Activated CD8-positive, alpha-beta T cell treated with anti-CD3 and anti-CD28 coated beads, Interleukin-2, amount 10 ng/mL, durations not matched to agents 7 days and 5 days (primary cell): ENCODE measurements at regions of chr19 and their contacts with region 1.

Region 1: DNA sequence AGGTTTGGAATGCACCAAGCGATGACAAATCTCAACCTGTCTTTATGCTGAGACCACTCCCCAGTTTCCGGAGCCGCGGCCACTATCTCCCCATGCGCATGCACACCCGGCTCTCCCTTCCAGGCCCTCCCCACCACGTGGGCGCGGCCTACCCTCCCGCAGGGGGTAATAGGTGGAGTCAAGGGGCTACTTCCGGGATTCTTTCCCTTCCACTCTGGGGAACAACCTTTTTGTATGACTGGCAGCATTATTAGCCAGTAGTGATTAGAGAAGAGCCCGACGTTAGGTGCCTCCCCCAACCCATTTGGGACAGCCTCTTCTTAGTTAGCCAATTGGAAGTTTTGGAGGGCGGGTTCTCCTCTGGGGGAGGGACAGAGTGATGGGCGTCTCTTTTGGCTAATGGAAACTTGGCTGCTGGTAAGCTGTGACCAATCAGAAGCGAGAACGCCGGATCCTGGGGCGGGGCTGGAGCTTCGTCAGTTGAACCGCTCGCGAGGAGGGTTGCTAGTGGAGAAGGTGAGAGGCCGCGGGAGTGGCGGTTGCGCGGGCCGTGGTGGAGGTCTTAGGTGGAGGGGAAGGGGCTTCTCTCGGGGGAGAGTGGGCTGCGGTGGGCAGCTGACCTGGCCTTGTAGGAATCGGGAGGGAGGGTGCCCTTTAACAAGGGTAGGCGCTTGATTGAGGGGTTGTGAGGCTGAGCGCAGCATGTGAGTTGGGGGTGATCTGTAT is at the start of gene CCDC61:
- DNase-seq: peak; percentile 97
- ATAC-seq: peak; percentile 99
- H3K4me3 Mint-ChIP-seq: no peak within 1 kb of the TSS
- H3K27ac Mint-ChIP-seq: no peak within 1 kb of the TSS
- H3K4me1 Mint-ChIP-seq: peaks cover 30% of the 10 kb centered on the region
- H3K27me3 Mint-ChIP-seq: peaks cover 7% of the 10 kb centered on the region
- total RNA-seq, gene CCDC61: 26.3 to 29.2 TPM

Region 2: DNA sequence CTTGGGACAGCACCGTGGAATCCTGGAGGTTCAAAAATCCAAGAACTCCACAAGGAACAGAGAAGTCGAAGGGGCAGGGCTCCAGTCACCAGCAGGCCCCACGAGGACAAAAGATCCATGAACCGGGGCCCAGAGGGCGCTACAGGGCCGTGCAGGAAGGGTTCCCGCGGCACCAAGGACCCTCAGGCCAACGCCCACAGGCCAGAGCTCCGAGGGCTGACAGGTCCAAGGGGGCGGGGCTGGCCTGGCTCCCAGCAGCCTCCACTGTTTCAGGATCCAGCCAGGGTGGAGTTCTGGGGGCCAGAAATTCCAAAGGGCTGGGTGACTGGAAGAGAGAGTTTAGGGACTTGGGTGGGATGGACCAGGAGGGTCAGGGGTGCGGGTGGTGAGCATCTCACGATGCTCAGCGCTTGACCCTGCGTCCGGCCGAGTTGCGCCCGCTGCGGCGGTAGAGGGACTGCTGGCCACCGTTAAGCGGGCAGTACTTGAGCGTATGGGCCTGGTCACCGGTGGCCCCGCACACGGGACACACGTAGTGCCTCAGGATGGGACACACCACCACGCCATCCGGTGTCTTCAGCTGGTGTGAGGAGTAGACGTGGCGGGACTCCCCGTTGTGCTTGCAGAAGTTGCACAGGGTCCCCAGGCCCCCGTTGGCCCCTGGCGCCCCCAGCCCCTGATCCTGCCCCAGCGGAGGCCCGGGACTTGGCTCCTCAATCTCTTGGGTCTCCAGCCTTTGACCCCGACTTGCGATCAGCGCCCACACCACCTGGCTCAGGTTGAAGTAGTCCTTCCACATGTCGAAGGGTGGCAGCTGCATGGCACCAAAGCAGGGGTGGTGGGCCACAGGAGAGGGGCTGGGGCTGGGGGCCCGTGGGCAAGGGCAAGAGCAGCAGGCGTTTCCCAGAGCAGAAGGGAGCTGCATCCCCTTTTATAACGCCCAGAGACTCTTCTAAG is 81.0 kb before region 1 on chr19 and contains the start of gene NANOS2:
- CTCF ChIA-PET with region 1: no interaction called
- POLR2A ChIA-PET with region 1: no interaction called
- DNase-seq: peak; percentile 51
- ATAC-seq: no peak
- H3K4me3 Mint-ChIP-seq: no peak within 1 kb of the TSS
- H3K27ac Mint-ChIP-seq: no peak within 1 kb of the TSS
- H3K4me1 Mint-ChIP-seq: peaks cover 28% of the 10 kb centered on the region
- H3K27me3 Mint-ChIP-seq: peaks cover 29% of the 10 kb centered on the region
- total RNA-seq, gene NANOS2: not detected

Region 3: DNA sequence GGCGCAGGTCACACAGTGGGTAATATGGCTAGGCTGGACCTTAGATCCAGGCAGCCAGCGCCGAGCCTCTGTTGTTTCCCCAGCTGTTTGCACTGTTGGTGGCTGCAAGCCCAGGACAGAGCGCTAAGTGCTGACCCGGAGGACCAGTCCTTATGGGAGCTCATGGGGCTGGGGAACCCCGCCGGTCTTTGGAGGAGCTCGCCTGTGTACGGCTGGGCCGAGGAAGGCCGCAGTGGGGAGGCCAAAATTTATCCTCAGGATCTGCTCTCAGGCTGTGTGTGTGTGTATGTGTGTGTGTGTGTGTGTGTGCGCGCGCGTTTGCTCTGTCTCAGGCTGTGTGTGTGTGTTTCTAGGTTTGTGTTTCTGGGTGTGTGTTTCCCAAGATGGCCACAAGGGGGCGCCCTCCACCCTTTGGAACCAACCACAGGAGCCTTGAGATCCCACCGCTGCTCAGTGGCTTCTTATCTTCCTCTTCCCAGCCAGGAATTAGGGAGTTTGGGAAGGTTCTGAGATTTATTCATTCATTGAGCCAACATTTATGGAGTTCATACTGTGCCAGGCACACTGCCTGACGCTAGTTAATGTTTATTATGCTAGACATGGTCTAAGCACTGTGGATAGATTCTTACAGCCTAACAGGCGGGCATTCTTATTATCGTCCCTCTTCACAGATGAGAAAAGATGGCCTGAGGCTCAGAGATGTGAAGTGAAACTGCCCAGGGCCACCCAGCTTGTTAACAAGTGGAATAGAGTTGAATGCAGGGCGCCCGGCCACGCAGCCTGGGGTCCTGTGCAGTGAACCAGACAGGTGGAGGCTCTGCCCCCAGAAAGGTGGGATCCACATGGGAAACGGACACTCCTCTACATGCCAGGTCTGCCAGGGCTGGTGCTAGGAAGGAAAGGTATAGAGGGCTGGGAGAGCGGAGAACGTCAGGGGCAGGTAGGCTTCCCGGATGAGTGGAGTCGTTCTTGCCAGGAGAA is 14.7 kb after region 1 on chr19:
- CTCF ChIA-PET with region 1: interaction called, 20 read pairs
- POLR2A ChIA-PET with region 1: no interaction called
- DNase-seq: peak; percentile 76
- ATAC-seq: peak; percentile 83
- H3K4me3 Mint-ChIP-seq: no peak overlapping the region
- H3K27ac Mint-ChIP-seq: no peak overlapping the region
- H3K4me1 Mint-ChIP-seq: peaks cover 6% of the 10 kb centered on the region
- H3K27me3 Mint-ChIP-seq: peaks cover 5% of the 10 kb centered on the region

Region 4: GRCh38 chr19:46016426-46017094 is 21.4 kb after region 1 on chr19:
- CTCF ChIA-PET with region 1: interaction called, 20 read pairs
- POLR2A ChIA-PET with region 1: no interaction called
- DNase-seq: peak; percentile 87
- ATAC-seq: peak; percentile 70
- H3K4me3 Mint-ChIP-seq: peak overlapping the region; percentile 81
- H3K27ac Mint-ChIP-seq: peak overlapping the region; percentile 68
- H3K4me1 Mint-ChIP-seq: peaks cover 17% of the 10 kb centered on the region
- H3K27me3 Mint-ChIP-seq: peaks cover 13% of the 10 kb centered on the region